Activated CD4-positive, alpha-beta T cell treated with anti-CD3 and anti-CD28 coated beads, Interleukin-2, amount 10 ng/mL, durations not matched to agents 24 days and 14 days (primary cell): ENCODE measurements at regions of chr15 and their contacts with region 1.

Region 1: DNA sequence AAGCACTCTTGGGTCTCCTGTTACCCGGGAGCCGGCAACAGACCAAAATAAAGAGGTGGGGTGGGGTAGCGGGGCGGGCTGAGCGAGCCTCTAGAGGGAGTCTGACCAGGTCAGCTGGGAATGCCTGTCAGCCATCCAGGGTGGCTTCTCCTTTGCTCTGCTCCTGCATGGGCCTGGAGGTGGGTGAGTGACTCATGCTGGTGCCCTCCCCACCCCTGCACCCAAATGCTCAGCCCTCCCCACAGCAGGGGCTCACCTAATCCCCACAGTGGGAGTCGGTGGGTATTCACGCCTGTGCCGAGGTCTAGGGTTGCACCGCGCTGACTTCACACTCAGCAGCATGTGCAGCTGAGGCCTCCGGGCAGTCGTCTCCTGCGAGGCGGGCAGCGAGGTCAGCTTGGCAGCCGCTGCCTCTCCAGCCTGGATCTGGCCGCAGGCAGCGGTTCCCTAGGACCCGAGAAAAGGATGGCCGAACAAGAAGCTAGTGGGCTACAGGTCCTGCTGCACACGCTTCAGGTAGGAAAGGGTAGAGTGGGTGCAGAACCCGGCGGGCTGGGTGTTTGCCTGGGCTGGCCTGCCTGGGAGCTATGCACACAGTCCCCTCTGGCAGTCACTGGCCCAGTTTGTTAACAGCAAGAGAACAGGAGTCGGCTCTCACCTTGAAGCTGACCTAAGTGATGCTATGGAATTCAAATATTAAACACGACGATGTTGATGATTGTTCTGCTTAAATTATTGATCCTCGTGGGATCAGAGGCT is at the start of gene AGBL1:
- DNase-seq: peak; percentile 34
- H3K4me3 Mint-ChIP-seq: no peak within 1 kb of the TSS
- H3K27ac Mint-ChIP-seq: no peak within 1 kb of the TSS
- H3K4me1 Mint-ChIP-seq: peaks cover 3% of the 10 kb centered on the region
- H3K27me3 Mint-ChIP-seq: peaks cover 6% of the 10 kb centered on the region
- total RNA-seq, gene AGBL1: not detected in 2 replicates

Region 2: GRCh38 chr15:86016749-86017148 is 62.9 kb before region 1 on chr15:
- intact Hi-C with region 1: loop called (anchors 10 kb)
- DNase-seq: no peak
- H3K4me3 Mint-ChIP-seq: no peak overlapping the region
- H3K27ac Mint-ChIP-seq: no peak overlapping the region
- H3K4me1 Mint-ChIP-seq: no peaks in the 10 kb centered on the region
- H3K27me3 Mint-ChIP-seq: no peaks in the 10 kb centered on the region